CD8-positive, alpha-beta T cell (primary cell): ENCODE measurements at regions of chr1 and their contacts with region 1.

Region 1: DNA sequence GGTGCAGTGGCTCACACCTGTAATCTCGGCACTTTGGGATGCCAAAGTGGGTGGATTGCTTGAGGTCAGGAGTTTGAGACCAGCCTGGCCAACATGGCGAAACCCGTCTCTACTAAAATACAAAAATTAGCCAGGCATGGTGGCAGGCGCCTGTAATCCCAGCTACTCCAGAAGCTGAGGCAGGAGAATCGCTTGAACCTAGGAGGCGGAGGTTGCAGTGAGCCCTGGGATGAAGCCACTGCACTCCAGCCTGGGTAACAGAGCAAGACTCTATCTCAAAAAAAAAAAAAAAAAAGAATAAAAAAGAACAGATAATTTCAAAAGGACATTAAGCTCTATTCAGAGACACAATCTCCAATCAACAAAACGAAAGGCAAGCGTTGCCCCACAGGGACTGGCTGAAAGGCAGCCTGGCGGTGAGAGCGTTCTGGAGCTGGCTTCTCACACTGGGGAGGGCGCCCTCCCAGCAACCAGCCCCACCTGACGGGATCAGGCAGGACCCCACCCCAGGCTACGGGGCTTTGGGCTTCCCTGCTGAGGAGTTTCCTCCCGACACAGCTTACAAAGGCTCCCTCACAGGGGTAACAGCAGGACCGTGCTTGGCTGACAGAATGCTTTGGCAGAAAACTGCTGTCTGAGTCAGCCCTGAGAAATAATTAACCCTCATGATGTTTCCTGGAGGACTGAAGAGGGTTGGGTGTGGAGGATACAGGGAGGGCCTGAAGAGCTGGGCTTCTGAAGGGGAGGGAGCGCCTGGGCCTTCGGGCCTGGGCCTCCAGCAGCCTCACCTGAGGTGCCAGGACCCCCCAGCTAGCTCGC is 31.1 kb upstream of the SRP9 start:
- DNase-seq: no peak
- ATAC-seq: no peak
- H3K4me3 ChIP-seq: no peak overlapping the region
- H3K4me3 Mint-ChIP-seq: no peak overlapping the region
- H3K27ac ChIP-seq: no peak overlapping the region
- H3K27ac Mint-ChIP-seq: no peak overlapping the region
- H3K4me1 ChIP-seq: no peaks in the 10 kb centered on the region
- H3K4me1 Mint-ChIP-seq: no peaks in the 10 kb centered on the region
- H3K27me3 ChIP-seq: no peaks in the 10 kb centered on the region
- H3K27me3 Mint-ChIP-seq: no peaks in the 10 kb centered on the region
- CTCF ChIP-seq: no peak

Region 2: GRCh38 chr1:225354906-225355305 is 391.7 kb before region 1 on chr1:
- CTCF ChIA-PET with region 1: no interaction called
- POLR2A ChIA-PET with region 1: no interaction called
- intact Hi-C with region 1: loop called in 1 of 2 experiments (anchors 10 kb)
- DNase-seq: no peak
- ATAC-seq: no peak
- H3K4me3 ChIP-seq: no peak overlapping the region
- H3K4me3 Mint-ChIP-seq: no peak overlapping the region
- H3K27ac ChIP-seq: no peak overlapping the region
- H3K27ac Mint-ChIP-seq: no peak overlapping the region
- H3K4me1 ChIP-seq: no peaks in the 10 kb centered on the region
- H3K4me1 Mint-ChIP-seq: no peaks in the 10 kb centered on the region
- H3K27me3 ChIP-seq: peaks cover 0 to 3% of the 10 kb centered on the region in 2 experiments
- H3K27me3 Mint-ChIP-seq: peaks cover 10% of the 10 kb centered on the region
- CTCF ChIP-seq: no peak